K562 (cell line): ENCODE measurements at regions of chr4 and their contacts with region 1.

Region 1: GRCh38 chr4:158729716-158730559 is 6.7 kb upstream of the PPID start:
- DNase-seq: peak in 2 of 4 experiments; percentile 59 to 70
- ATAC-seq: peak; percentile 97
- H3K4me3 ChIP-seq: no peak overlapping the region
- H3K27ac ChIP-seq: no peak overlapping the region
- H3K4me1 ChIP-seq: no peaks in the 10 kb centered on the region; a peak in 2 of 5 replicates
- H3K27me3 ChIP-seq: no peaks in the 10 kb centered on the region
- CTCF ChIP-seq: peak; percentile 83 to 88 (median 86)
- EP300 ChIP-seq: no peak
- POLR2A ChIP-seq: no peak
- RAD21 ChIP-seq: peak; percentile 79 to 85

Region 2: DNA sequence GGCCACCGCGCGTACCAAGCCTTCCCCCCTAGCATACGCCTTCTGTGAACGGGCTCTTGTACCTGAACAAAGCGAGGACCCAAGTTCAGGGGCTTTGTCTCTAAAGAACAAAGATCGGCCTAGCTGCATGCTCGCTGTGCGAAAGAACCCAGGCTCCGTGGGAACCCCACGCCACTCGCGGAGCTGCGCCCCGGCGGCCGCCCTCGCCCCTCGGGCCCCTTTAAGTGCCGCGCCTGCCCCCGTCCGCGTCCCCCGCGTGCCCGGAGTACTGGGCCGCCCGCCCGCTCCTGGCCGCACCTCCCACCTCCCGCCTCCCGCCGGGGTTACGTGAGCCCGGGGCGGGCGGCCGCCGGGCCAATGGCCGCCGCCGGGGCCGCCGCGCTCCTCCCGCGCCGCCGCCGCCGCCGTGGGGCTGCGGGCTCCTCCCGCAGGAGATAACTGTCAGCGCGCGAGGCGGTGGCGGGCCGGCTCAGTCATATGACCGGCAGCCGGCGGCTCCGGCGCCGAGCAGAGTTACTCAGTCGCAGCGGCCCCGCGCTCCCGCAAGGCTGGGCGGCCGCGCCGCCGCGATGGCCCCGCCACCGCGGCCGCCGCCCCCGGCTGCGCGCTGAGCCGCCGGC is 38.7 kb after region 1 on chr4 and contains the start of gene FNIP2:
- CTCF ChIA-PET with region 1: no interaction called
- POLR2A ChIA-PET with region 1: no interaction called
- in situ Hi-C with region 1: no loop called
- intact Hi-C with region 1: loop called (anchors 2 kb)
- DNase-seq: peak; percentile 86 to 95 (median 92)
- ATAC-seq: peak; percentile 94
- H3K4me3 ChIP-seq: peak within 1 kb of the TSS; percentile 58
- H3K27ac ChIP-seq: peak within 1 kb of the TSS; percentile 73
- H3K4me1 ChIP-seq: peaks cover 9 to 13% of the 10 kb centered on the region in 2 experiments; a peak in 4 of 5 replicates
- H3K27me3 ChIP-seq: no peaks in the 10 kb centered on the region
- CTCF ChIP-seq: no peak
- EP300 ChIP-seq: no peak
- POLR2A ChIP-seq: peak; percentile 54; the same call in 1 of the 2 replicates
- RAD21 ChIP-seq: no peak
- polyA plus RNA-seq, gene FNIP2: 1.7 to 2.8 TPM

Region 3: DNA sequence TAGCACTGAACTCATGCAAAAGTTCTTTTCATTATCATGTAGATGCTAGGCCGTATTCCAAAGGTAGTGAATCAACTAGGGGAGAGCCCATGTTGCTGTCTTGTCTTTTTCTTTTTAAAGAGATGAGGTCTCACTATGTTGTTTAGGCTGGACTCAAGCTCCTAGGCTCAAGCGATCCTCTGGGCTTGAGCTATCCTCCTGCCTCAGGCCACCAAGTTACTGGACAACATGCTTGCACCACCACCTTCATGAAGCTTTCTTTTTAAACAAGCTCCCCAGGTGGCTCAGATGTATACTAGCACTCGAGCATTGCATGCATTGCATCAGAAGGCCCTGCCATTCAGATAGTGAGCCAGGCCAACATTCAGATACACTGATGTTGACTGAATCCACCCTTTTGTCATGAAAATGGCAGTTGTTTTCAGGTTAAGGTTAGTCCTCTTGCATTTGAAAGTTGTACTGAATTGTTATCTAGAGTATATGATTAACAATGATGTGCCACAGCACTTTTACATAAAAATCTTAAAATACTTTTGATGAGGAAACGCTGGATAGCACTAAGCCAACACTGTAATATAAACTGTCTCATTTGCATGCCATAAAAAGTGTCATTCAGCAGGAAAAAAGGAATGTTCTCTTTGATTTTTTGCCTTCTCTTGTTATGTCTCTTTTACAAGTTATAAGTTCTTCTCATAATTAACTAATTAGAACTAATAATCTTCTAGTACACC is 115.5 kb after region 1 on chr4:
- CTCF ChIA-PET with region 1: interaction called, 20 read pairs
- POLR2A ChIA-PET with region 1: no interaction called
- in situ Hi-C with region 1: loop called (anchors 5 kb)
- intact Hi-C with region 1: loop called (anchors 1 kb)
- DNase-seq: no peak
- ATAC-seq: peak; percentile 93
- H3K4me3 ChIP-seq: no peak overlapping the region
- H3K27ac ChIP-seq: no peak overlapping the region
- H3K4me1 ChIP-seq: no peaks in the 10 kb centered on the region; a peak in 1 of 5 replicates
- H3K27me3 ChIP-seq: no peaks in the 10 kb centered on the region
- CTCF ChIP-seq: no peak
- EP300 ChIP-seq: peak; percentile 13; the same call in 1 of the 2 replicates
- POLR2A ChIP-seq: no peak
- RAD21 ChIP-seq: peak in 1 of 2 experiments; percentile 19; a peak in 3 of 4 replicates

Region 4: DNA sequence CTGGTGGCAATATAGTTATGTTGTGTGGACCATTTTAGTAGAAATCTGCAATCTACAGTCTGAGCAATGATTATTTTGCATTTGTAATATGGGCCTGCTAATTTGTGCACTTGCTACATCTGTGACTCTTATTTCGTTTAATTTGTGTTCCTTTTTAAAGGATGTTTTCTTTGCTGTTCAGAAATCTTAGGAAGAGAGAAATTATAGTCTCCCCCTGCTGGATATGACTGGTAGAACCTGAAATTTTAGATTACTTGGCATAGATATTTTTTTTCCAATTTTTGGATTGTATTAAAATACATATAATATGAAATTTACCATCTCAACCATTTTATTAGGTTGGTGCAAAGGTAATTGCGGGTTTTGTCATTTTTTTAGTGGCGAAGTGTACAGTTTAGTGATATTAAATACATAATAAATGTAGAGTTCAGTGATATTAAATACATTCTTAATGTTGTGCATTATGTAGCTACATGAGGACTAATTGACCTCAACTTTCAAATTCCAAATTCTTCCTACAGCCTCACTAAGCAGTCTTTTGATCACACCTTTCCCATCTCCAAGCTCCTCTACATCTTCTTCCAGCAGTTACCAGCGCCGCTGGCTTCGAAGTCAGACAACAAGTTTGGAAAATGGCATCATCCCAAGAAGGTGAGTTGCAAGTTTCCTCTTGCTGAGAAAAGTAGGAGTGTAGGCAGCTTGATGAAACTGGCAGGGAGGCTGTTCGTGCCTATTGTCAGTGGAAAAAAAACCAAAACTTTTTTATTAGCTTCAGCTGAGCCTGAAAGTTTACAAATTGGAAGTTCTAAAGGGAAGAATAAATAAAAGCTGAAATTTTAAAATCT is 121.1 kb after region 1 on chr4:
- CTCF ChIA-PET with region 1: interaction called, 20 read pairs
- POLR2A ChIA-PET with region 1: no interaction called
- in situ Hi-C with region 1: loop called (anchors 5 kb)
- intact Hi-C with region 1: loop called (anchors 1 kb)
- DNase-seq: peak; percentile 24 to 38 (median 32)
- ATAC-seq: peak; percentile 45; the same call in 1 of the 3 replicates
- H3K4me3 ChIP-seq: no peak overlapping the region
- H3K27ac ChIP-seq: no peak overlapping the region
- H3K4me1 ChIP-seq: no peaks in the 10 kb centered on the region; a peak in 1 of 5 replicates
- H3K27me3 ChIP-seq: no peaks in the 10 kb centered on the region
- CTCF ChIP-seq: peak; percentile 37 to 69 (median 52); a peak in 4 of 6 replicates
- EP300 ChIP-seq: no peak
- POLR2A ChIP-seq: no peak
- RAD21 ChIP-seq: peak; percentile 71 to 81

Region 5: DNA sequence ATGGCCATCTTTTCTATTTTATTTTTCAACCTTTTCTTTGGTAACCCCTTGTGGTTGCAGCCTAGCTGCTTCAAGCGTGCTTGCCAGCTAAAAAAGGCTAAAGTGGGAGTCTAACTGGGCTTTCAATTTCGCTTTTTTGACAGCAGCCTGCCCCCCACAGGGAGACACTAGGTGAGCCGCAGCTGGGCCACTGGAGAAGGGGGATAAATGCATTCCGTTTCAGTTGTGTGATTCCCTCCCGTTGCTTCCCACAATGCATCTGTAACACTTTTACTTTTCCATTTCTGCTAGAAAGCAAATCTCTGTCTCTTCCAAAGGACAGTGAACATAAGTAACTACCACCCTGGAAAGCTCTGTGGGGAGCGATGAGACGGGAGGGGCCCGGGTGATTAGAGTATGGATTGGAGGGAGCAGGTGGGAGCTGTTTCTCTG is 286.7 kb after region 1 on chr4:
- CTCF ChIA-PET with region 1: no interaction called
- POLR2A ChIA-PET with region 1: no interaction called
- in situ Hi-C with region 1: no loop called
- intact Hi-C with region 1: loop called (anchors 2 kb)
- DNase-seq: peak; percentile 46 to 70 (median 58)
- ATAC-seq: peak; percentile 86
- H3K4me3 ChIP-seq: no peak overlapping the region
- H3K27ac ChIP-seq: no peak overlapping the region
- H3K4me1 ChIP-seq: peaks cover 3 to 13% of the 10 kb centered on the region in 2 experiments; a peak in 3 of 5 replicates
- H3K27me3 ChIP-seq: no peaks in the 10 kb centered on the region
- CTCF ChIP-seq: peak; percentile 52 to 63 (median 59)
- EP300 ChIP-seq: no peak
- POLR2A ChIP-seq: no peak
- RAD21 ChIP-seq: peak; percentile 30 to 69; a peak in 3 of 4 replicates

Region 6: GRCh38 chr4:159206427-159206871 is 476.5 kb after region 1 on chr4:
- CTCF ChIA-PET with region 1: interaction called, 5 read pairs
- POLR2A ChIA-PET with region 1: no interaction called
- in situ Hi-C with region 1: no loop called
- intact Hi-C with region 1: loop called (anchors 2 kb)
- DNase-seq: no peak
- ATAC-seq: no peak
- H3K4me3 ChIP-seq: no peak overlapping the region
- H3K27ac ChIP-seq: no peak overlapping the region
- H3K4me1 ChIP-seq: no peaks in the 10 kb centered on the region; a peak in 1 of 5 replicates
- H3K27me3 ChIP-seq: no peaks in the 10 kb centered on the region
- CTCF ChIP-seq: no peak
- EP300 ChIP-seq: no peak
- POLR2A ChIP-seq: no peak
- RAD21 ChIP-seq: no peak